ENCODE measurements at regions of chr10 and their contacts with region 1.

Region 1: DNA sequence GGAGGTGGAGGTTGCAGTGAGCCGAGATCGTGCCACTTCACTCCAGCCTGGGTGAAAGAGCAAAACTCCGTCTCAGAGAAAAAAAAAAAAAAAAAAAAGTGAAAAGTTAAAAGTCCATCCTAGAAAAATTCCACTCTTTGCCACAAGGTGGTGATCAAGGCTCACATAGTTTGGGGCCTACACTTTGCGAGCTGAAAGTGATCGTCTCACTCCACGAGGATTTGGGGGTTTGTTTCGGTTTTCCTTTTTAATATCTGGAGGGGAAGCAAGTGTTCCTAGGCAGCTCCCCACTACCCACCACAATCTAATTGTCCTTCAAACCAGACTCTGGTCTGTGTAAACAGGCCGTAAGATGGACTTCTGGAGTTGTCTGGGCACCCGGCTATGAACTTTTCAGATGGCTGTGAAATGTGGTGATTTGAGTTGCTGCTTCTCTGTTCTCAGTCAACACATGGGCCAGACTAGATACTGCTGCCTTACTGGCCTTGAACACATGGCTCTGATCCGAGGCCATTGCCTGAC is 27.1 kb downstream of the PRLHR start:
- DNase-seq: peak; percentile 73
- ATAC-seq: peak; percentile 75
- H3K4me3 Mint-ChIP-seq: no peak overlapping the region
- H3K27ac Mint-ChIP-seq: no peak overlapping the region
- H3K4me1 Mint-ChIP-seq: peaks cover 9% of the 10 kb centered on the region
- H3K27me3 Mint-ChIP-seq: peaks cover 4% of the 10 kb centered on the region

Region 2: GRCh38 chr10:118584181-118584954 is 16.0 kb after region 1 on chr10:
- CTCF ChIA-PET with region 1: interaction called, 15 read pairs
- POLR2A ChIA-PET with region 1: no interaction called
- DNase-seq: no peak
- ATAC-seq: no peak
- H3K4me3 Mint-ChIP-seq: no peak overlapping the region
- H3K27ac Mint-ChIP-seq: no peak overlapping the region
- H3K4me1 Mint-ChIP-seq: no peaks in the 10 kb centered on the region
- H3K27me3 Mint-ChIP-seq: peaks cover 3% of the 10 kb centered on the region

Region 3: GRCh38 chr10:118712930-118713634 is 144.7 kb after region 1 on chr10:
- CTCF ChIA-PET with region 1: interaction called, 13 read pairs
- POLR2A ChIA-PET with region 1: interaction called, 3 read pairs
- DNase-seq: no peak
- ATAC-seq: peak; percentile 36
- H3K4me3 Mint-ChIP-seq: no peak overlapping the region
- H3K27ac Mint-ChIP-seq: no peak overlapping the region
- H3K4me1 Mint-ChIP-seq: peaks cover 25% of the 10 kb centered on the region
- H3K27me3 Mint-ChIP-seq: no peaks in the 10 kb centered on the region

Region 4: DNA sequence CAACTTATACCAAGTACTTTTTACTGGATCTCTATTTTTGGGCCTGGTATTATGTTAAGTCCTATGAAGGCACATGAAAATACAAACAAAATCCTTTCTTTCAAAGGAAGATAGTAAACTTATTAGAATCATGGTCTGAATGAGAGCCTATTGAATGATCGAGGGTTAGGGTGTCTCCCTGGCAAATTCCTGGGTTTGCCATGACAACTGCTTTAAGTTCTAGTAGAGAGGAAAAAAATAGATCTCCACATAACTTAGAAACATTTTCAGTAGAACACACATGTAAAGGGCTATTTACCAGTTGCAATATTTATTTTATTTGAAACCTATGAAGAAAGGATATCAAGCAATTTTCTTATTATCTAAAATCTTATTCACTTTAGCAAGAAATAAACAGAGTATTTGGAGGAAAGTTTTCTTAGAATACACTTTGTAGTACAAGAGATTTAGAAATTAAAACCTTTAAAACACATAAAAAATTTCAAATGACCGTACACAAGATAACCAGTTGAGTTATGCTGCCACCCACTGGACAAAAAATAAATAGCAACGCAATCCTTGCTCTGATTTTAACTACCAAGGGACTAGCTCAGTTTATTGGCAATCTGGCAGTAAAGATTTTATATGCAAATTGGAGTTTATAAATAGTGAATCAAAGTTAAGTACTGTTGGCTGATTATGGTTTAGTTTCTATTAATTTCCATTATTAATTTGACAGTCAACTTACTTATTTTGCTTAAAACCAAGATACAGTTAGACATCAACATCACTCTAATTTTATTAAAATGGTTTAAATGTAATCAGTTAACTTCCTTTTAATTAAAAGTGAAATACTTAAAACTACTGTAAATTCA is 152.5 kb after region 1 on chr10:
- CTCF ChIA-PET with region 1: interaction called, 97 read pairs
- POLR2A ChIA-PET with region 1: no interaction called
- DNase-seq: peak; percentile 80
- ATAC-seq: peak; percentile 51
- H3K4me3 Mint-ChIP-seq: no peak overlapping the region
- H3K27ac Mint-ChIP-seq: no peak overlapping the region
- H3K4me1 Mint-ChIP-seq: peaks cover 16% of the 10 kb centered on the region
- H3K27me3 Mint-ChIP-seq: no peaks in the 10 kb centered on the region

Region 5: DNA sequence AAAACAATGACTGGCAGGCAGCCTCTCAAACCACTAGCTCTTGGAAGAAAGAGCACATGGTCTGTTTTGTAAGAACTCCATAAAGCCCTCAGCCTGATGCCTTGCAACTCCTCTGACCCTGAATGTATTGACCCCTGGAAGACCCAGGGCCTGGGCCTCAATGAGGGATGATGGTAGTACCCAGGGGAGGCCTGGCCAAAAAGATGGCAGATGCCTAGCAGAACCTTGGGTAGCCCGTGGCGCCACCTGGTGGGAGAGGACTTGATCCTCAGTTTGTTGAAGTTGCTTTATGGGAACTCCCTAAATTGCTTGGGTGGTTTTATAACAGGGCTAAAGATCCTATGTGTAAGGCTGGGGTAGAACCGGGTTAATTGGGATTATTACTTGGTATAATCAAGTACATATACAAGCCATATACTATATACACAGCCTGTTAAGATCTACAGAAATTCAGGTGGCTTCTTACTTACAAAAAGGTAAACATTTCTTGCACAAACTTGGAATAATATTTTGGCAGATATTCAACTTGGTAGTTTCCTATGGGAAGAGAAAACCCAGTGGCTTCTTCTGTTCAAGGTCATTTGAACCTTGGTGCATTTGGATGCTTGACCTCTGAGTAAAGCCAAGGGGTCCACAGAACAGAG is 282.2 kb after region 1 on chr10:
- CTCF ChIA-PET with region 1: interaction called, 17 read pairs
- POLR2A ChIA-PET with region 1: no interaction called
- DNase-seq: peak; percentile 80
- ATAC-seq: peak; percentile 55
- H3K4me3 Mint-ChIP-seq: no peak overlapping the region
- H3K27ac Mint-ChIP-seq: no peak overlapping the region
- H3K4me1 Mint-ChIP-seq: no peaks in the 10 kb centered on the region
- H3K27me3 Mint-ChIP-seq: peaks cover 10% of the 10 kb centered on the region

Measured in activated CD8-positive, alpha-beta T cell treated with anti-CD3 and anti-CD28 coated beads, Interleukin-2, amount 10 ng/mL, durations not matched to agents 7 days and 5 days (primary cell).